Psoas muscle (tissue), 8 donors: ENCODE measurements at regions of chr2 and their contacts with region 1.

Region 1: DNA sequence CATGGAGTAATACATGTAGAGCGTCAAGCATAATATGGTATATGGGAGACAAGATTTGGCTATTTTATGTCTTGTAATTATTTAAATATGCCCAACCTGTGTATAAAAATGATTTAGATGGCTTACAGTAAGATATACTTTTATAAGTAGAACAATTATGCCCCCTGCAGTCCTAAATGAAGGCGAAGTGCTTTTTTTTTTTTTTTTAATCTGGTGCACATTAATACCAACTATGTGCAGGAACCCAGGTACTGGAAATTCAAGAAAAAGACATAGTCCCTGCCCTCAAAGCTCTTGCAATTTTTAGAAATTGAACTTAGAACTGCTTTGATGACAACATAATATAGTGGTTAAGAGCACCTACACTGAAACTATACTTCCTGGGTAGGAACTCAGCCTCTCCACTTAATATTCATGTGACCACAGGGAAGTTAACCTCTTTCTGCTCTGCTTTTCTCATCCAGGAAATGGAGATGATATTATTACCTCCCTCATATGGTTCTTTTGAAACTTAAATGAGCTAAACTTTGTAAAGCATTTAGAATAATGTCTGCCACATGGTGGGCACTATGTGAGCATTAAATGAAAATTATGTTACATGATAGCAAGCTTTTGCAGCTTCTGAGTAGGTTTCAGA is 38.1 kb downstream of the AFTPH start:
- DNase-seq: no peak
- ATAC-seq: peak in 2 of 4 donors; percentile 42 to 79
- H3K4me3 ChIP-seq: no peak overlapping the region
- H3K27ac ChIP-seq: no peak overlapping the region
- H3K4me1 ChIP-seq: peaks cover 23% of the 10 kb centered on the region
- H3K27me3 ChIP-seq: no peaks in the 10 kb centered on the region
- CTCF ChIP-seq: peak; percentile 42

Region 2: GRCh38 chr2:64045938-64046337 is 516.3 kb before region 1 on chr2:
- intact Hi-C with region 1: loop called in 1 of 2 experiments (anchors 5 kb)
- DNase-seq: no peak
- ATAC-seq: no peak
- H3K4me3 ChIP-seq: no peak overlapping the region
- H3K27ac ChIP-seq: no peak overlapping the region
- H3K4me1 ChIP-seq: no peaks in the 10 kb centered on the region
- H3K27me3 ChIP-seq: no peaks in the 10 kb centered on the region
- CTCF ChIP-seq: no peak

Region 3: GRCh38 chr2:64523666-64524603 is 38.3 kb before region 1 on chr2 and contains the start of gene AFTPH:
- intact Hi-C with region 1: loop called (anchors 2 to 5 kb)
- DNase-seq: peak; percentile 99
- ATAC-seq: peak; percentile 99 to 100 (median 100)
- H3K4me3 ChIP-seq: peak within 1 kb of the TSS; percentile 97
- H3K27ac ChIP-seq: peak within 1 kb of the TSS; percentile 97
- H3K4me1 ChIP-seq: peaks cover 20% of the 10 kb centered on the region
- H3K27me3 ChIP-seq: no peaks in the 10 kb centered on the region
- CTCF ChIP-seq: peak; percentile 10
- total RNA-seq, gene AFTPH: 12.2 to 15.6 (median 13.0) TPM

Region 4: GRCh38 chr2:64538764-64539433 is 23.4 kb before region 1 on chr2:
- intact Hi-C with region 1: no loop called
- DNase-seq: no peak
- ATAC-seq: no peak
- H3K4me3 ChIP-seq: no peak overlapping the region
- H3K27ac ChIP-seq: no peak overlapping the region
- H3K4me1 ChIP-seq: peaks cover 31% of the 10 kb centered on the region
- H3K27me3 ChIP-seq: no peaks in the 10 kb centered on the region
- CTCF ChIP-seq: no peak

Region 5: DNA sequence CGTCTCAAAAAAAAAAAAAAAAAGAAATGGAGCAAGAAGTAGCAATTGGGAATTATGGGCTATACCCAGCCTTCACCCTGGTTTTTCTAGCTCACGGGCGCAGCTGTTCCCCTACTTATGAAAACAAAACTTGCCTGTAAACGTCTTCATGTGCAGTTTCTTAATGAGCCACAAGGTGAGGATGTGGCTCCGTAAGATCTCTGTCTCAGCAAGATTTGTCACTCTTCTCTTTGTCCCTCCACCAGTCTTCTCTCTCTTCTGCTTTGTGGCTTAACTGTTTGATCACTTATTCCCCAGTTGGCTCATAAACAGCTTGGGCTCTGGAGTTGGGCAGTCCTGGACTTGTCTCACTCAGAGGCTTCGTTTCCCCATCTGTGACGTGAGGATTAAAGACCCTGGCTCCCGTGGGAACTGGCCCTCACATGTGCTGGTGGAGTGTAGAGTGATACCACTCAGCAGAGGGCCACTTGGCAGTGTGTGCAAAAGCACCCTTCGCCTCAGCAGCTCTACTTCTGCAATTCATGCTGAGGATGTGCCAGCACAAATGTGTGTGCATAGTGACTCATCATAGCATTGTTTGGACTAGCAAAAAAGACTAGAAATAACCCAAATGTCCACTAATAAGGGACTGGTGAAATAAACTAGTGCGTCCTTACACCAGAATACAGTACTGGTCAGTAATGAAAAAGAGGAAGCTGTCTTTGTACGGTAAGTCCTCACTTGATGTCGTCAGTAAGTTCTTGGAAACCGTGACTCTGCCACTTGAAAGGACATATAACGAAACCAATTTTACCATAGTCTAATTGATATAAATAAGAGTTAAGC is 502.7 kb after region 1 on chr2:
- intact Hi-C with region 1: no loop called
- DNase-seq: peak; percentile 78 to 87
- ATAC-seq: peak; percentile 61 to 73 (median 68)
- H3K4me3 ChIP-seq: peak overlapping the region; percentile 47
- H3K27ac ChIP-seq: peak overlapping the region; percentile 94
- H3K4me1 ChIP-seq: peaks cover 95% of the 10 kb centered on the region
- H3K27me3 ChIP-seq: no peaks in the 10 kb centered on the region
- CTCF ChIP-seq: peak; percentile 84